GM10248 (cell line): ENCODE measurements at regions of chr19 and their contacts with region 1.

Region 1: GRCh38 chr19:48872182-48872883 is at the start of gene PPP1R15A:
- DNase-seq: peak; percentile 97
- CTCF ChIP-seq: no peak

Region 2: DNA sequence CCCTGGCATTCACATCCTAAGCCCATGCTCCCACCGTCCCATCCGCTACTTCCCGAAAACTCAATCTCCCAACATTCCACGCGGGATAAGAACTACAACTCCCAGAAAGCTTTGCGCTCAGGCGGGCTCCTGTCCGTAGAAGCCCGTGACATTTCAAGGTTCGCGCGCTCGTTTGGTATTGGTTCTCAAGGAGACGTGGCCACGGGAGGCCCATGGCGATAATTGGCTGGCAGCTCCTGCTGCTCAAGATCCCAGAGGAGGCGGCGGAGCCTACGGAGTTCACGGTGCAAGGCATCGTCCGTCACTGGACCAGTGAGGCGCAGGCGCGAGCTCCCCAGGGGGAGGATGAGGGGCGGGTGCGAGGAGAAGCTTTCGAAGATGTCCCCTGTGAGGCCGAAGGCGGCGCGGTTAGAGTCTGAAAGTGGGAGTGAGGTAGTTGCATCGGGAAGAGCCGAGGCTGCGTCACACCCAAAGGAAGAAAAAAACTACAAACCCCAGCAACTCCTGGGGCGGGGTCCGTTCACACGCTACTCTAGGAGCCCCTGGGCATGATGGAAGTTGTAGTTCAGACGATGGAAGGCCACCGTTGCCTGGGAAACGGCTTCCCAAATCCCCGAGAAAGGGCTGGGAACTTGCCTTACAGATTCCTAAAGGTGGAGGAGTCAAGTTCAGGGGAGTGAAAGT is 151.6 kb before region 1 on chr19:
- CTCF ChIA-PET with region 1: no interaction called
- POLR2A ChIA-PET with region 1: interaction called, 11 read pairs
- DNase-seq: peak; percentile 96
- CTCF ChIP-seq: no peak

Region 3: DNA sequence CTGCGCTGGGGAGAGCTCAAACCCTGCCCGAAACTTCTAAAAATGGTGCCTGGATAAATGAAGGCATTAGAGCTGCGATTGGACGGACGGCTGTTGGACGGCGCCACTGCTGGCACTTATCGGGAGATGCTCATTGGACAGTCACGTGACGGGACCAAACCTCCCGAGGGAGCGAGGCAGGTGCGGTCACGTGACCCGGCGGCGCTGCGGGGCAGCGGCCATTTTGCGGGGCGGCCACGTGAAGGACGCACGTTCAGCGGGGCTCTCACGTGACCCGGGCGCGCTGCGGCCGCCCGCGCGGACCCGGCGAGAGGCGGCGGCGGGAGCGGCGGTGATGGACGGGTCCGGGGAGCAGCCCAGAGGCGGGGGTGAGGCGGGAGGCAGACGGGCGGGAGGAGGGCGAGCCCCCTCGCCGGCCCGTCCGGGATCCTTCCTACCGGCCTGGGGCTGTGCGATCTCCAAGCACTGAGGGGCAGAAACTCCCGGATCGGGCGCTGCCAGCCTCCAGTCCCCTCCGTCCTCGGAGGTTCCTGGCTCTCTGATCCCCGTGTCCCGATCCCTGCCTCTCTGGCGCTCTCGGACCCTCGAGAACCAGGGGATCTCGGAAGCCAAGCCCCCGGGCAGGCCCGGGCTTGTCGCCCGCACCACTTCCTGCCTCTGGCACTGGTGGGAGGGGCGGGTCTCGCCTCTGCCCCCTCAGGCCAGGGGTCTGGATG is 82.4 kb after region 1 on chr19 and contains the start of gene BAX:
- CTCF ChIA-PET with region 1: no interaction called
- POLR2A ChIA-PET with region 1: interaction called, 11 read pairs
- DNase-seq: peak; percentile 98
- CTCF ChIP-seq: no peak

Region 4: DNA sequence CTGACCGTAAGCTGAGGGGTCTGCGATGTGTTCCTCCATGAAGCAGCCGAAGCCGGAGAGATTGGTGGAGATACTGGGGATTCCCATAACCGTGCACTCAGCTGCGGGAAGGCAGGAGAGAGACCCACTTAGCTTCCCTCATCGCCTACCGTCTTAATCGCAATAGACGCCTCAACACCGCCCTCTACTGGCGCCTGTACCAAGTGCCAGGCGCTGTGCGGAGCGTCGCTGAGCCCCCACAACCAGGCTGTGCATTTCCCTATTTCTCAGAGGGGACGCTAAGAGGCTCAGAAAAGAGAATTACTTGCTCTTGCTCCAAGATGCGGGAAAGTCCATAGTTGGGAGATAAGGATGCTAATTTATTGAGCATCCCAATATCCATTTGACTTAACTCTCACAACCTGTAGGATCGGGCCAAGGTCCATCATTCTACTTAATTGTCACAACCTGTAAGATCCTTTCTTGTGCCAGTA is 98.6 kb after region 1 on chr19:
- CTCF ChIA-PET with region 1: interaction called, 17 read pairs
- POLR2A ChIA-PET with region 1: interaction called, 67 read pairs
- DNase-seq: peak; percentile 77
- CTCF ChIP-seq: peak; percentile 93

Region 5: GRCh38 chr19:49127674-49128544 is 255.6 kb after region 1 on chr19:
- CTCF ChIA-PET with region 1: no interaction called
- POLR2A ChIA-PET with region 1: interaction called, 10 read pairs
- DNase-seq: peak; percentile 99
- CTCF ChIP-seq: no peak